ENCODE measurements at regions of chr13 and their contacts with region 1.

Region 1: GRCh38 chr13:75876360-75877050 is 240.4 kb downstream of the LMO7 start:
- DNase-seq: peak; percentile 26
- H3K4me3 ChIP-seq: no peak overlapping the region
- H3K27ac ChIP-seq: no peak overlapping the region
- H3K27me3 ChIP-seq: peaks cover 4% of the 10 kb centered on the region
- CTCF ChIP-seq: peak; percentile 92

Region 2: DNA sequence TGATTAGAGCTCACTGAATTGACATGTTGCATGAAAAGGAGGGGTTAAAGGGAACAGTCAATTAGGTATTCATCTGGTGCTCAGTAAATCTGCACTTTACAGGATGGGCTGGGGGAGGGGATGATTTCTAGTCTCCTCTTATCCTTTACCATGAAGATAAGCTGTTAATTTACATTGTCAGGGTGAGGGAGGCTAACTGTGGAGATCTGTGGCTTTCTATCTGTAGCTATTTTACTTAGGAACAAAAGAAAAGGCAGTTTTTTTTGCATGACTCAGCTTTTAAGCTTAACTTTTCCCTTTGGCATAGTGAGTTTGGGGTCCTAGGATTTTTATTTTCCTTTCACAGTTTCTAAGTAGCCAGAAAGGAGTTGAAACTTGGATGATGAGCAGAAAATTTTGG is 12.9 kb after region 1 on chr13:
- CTCF ChIA-PET with region 1: interaction called, 10 read pairs
- POLR2A ChIA-PET with region 1: no interaction called
- DNase-seq: no peak
- H3K4me3 ChIP-seq: no peak overlapping the region
- H3K27ac ChIP-seq: no peak overlapping the region
- H3K27me3 ChIP-seq: peaks cover 4% of the 10 kb centered on the region
- CTCF ChIP-seq: no peak

Region 3: GRCh38 chr13:75968103-75968838 is 91.8 kb after region 1 on chr13:
- CTCF ChIA-PET with region 1: no interaction called
- POLR2A ChIA-PET with region 1: no interaction called
- DNase-seq: no peak
- H3K4me3 ChIP-seq: no peak overlapping the region
- H3K27ac ChIP-seq: no peak overlapping the region
- H3K27me3 ChIP-seq: no peaks in the 10 kb centered on the region
- CTCF ChIP-seq: no peak

Region 4: DNA sequence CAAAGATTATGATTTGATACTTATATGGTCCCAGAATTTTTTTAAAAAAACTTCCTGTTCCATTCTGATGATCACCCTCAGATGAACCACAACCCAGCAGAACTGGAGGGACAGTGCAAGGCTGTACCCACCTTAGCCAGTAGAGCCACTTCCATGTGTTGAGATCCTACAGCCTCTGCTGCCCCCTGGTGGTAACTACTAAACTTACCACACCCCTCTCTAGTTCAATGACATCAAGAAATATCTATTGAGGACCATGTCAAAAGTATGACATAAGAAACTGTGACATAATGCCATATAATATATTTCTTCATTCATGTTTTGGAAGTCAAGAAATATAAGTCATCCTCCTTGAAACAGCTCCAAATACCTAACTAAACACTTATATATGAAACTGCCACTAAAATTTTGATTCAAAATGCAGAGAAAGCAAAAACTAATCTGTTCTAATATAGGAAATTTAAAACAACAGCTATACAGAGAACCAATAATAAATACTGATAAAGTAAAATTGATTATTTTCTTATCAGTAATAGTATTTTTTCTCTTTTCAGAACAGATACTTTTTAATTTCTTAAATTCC is 597.1 kb after region 1 on chr13:
- CTCF ChIA-PET with region 1: interaction called, 132 read pairs
- POLR2A ChIA-PET with region 1: no interaction called
- DNase-seq: peak; percentile 52
- H3K4me3 ChIP-seq: no peak overlapping the region
- H3K27ac ChIP-seq: no peak overlapping the region
- H3K27me3 ChIP-seq: peaks cover 2% of the 10 kb centered on the region
- CTCF ChIP-seq: peak; percentile 86

Measured in AG04450 (cell line).